Activated naive CD8-positive, alpha-beta T cell treated with anti-CD3 and anti-CD28 coated beads, Interleukin-2, amount 10 ng/mL, durations not matched to agents 7 days and 5 days (primary cell): ENCODE measurements at regions of chr1 and their contacts with region 1.

Region 1: DNA sequence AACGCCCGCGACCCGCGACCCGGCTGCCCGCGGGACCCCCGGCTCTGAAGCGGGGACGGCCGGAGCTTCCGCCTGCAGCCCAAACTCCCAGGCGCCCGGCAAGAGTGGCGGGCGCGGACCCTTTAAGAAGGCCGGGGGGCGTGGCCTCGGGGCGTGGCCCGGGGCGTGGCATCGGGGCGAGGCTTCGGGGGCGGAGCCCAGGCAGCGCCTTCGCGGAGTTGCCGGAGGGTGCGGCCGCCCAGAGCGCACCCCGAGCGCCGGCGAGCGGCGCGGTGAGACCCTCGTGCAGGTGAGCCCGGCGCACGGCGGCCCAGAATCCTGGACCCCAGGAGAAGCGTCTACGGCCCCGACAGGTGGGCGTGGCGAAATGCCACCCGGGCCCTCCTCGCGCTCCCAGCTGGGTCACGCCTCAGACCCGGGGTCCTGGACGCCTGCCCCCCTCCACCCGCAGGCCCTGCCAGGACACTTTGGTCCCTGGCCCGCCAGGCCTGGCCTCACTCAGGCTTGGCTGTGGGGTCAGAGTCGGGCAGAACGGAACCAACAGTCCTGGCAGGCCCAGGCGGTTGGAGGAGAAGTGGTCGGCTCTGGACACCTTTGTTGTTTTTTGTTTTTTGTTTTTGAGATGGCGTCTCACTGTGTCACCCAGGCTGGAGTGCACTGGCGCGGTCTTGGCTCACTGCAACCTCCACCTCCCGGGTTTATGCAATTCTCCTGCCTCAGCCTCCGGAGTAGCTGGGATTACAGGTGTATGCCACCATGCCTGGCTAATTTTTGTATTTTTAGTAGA is 14.4 kb downstream of the RNF223 start:
- DNase-seq: peak; percentile 100
- ATAC-seq: peak; percentile 55
- H3K4me3 Mint-ChIP-seq: peak overlapping the region; percentile 87
- H3K27ac Mint-ChIP-seq: peak overlapping the region; percentile 67
- H3K4me1 Mint-ChIP-seq: peaks cover 19% of the 10 kb centered on the region
- H3K27me3 Mint-ChIP-seq: peaks cover 9% of the 10 kb centered on the region

Region 2: GRCh38 chr1:958823-959729 is 100.6 kb before region 1 on chr1 and contains the start of gene NOC2L:
- POLR2A ChIA-PET with region 1: no interaction called
- DNase-seq: peak; percentile 97
- ATAC-seq: peak; percentile 65
- H3K4me3 Mint-ChIP-seq: peak within 1 kb of the TSS; percentile 97
- H3K27ac Mint-ChIP-seq: peak within 1 kb of the TSS; percentile 85
- H3K4me1 Mint-ChIP-seq: peaks cover 14% of the 10 kb centered on the region
- H3K27me3 Mint-ChIP-seq: no peaks in the 10 kb centered on the region
- total RNA-seq, gene NOC2L: 63.0 to 63.4 TPM

Region 3: DNA sequence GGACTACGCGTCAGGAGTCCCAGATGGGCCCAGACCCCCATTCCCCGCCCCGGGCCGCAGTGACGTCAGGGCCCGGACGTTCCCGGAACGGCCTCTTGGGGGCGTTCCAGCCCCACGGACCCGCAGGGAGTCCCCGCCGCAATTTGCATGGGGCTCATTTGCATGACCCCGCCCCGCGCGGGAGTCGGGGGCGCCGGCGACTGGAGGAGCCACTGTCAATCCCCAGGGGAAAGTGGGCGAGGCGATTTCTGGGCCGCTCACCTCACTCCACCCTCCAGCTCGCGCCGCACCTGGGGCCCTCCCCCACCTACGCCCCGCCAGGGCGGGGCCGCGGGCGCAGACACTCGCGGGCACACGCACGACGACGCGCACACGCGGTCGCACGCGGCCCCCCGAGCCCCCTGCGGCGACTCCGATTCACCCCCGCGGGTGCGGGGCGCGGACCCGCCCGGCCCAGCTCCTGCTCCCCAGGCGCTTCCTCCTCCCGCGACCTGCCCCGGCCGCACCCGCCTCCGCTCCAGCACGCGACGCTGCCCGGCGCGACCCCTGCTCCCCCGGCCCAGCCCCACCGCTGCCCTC is 26.6 kb before region 1 on chr1:
- POLR2A ChIA-PET with region 1: interaction called, 46 read pairs
- DNase-seq: peak; percentile 96
- ATAC-seq: peak; percentile 92
- H3K4me3 Mint-ChIP-seq: no peak overlapping the region
- H3K27ac Mint-ChIP-seq: no peak overlapping the region
- H3K4me1 Mint-ChIP-seq: peaks cover 4% of the 10 kb centered on the region
- H3K27me3 Mint-ChIP-seq: no peaks in the 10 kb centered on the region

Region 4: DNA sequence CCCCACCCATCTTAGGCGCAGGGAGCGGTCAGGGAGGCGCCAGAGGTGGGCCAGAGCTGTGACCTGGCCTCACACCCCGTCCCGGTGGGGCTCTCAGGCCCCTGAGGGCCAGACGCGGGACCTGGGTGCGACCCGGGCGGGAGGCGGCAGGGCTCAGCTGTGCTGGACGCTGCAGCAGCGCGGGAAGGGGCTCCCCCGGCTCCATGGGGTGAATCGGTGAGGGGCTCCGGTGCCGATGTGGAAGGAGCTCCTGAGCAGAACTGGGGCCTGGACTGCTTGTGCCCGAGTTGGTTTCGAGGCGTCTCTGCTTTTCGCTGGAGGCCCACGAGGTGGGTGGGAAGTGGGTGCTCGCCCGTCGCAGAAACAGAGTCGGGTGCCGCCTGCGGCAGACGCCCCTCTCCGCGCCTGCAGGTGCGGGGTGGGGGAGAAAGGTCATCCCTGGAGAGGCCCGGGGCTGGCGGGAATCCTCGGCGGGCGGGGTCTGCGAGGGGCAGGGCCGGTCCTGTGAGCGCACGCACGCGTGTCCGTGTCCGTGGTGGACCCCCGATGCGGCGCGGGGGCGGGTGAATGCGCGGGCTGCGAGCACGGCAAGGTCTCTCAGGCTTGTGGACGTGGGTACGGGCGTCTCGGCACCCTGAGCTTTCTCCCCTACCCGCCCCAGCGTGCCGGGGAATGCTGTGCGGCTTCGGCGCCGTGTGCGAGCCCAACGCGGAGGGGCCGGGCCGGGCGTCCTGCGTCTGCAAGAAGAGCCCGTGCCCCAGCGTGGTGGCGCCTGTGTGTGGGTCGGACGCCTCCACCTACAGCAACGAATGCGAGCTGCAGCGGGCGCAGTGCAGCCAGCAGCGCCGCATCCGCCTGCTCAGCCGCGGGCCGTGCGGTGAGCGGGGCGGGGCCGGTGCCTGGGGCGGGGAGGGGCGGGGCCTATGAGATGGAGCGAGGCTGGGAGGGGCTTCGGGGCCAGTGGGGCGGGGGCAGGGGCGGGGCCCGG is 19.4 kb before region 1 on chr1:
- POLR2A ChIA-PET with region 1: interaction called, 46 read pairs
- DNase-seq: peak; percentile 88
- ATAC-seq: peak; percentile 91
- H3K4me3 Mint-ChIP-seq: peak overlapping the region; percentile 89
- H3K27ac Mint-ChIP-seq: peak overlapping the region; percentile 80
- H3K4me1 Mint-ChIP-seq: peaks cover 15% of the 10 kb centered on the region
- H3K27me3 Mint-ChIP-seq: no peaks in the 10 kb centered on the region